ENCODE measurements at regions of chr15 and their contacts with region 1.

Region 1: GRCh38 chr15:52780172-52780980 is 9.8 kb downstream of the ONECUT1 start:
- DNase-seq: peak; percentile 60
- H3K4me3 Mint-ChIP-seq: no peak overlapping the region
- H3K27ac Mint-ChIP-seq: no peak overlapping the region
- H3K4me1 Mint-ChIP-seq: peaks cover 6% of the 10 kb centered on the region
- H3K27me3 Mint-ChIP-seq: peaks cover 77% of the 10 kb centered on the region

Region 2: DNA sequence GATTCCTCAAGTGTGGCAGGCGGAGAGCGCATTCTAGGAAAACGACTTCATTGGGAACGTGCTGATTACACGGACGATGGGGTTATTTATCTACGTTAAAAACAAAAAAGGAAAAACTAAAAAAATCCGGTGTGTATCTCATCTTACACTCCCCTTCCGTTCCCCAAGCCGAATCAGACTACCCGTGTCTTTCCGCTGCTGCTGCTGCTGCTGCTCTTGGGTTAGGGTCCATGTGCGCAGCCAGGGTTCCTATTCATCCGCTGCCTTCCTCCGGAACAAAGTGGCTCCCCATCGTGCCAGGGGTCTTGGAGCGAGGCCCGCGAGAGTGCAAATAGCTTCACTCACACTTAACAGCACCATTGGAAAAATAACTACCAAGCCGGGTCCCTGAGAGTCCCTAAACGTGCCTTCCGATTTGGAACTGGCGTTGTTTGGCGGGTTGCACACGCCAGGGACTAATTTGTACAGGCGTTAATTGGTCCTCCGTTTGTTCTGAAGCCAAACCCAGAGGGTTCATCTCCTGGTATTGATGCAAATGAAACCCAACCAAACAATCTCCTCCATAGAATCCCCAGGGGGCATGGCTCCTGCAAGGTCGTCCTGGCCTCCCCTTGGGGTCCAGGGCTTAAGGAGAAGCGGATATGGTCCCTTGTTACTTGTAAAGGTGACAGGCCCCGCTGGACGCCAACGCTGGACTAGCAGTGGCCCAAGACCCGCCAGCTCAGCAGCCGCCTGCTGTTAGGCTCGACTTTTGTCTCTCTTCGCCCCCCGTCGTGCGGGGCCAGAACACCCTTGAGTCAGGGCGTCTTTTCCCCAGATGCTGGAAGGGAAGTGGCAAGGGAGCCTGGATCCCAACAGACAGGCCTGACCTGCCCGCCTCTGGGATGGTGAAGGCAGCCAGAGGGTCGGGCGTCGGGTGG is 20.7 kb after region 1 on chr15:
- intact Hi-C with region 1: loop called (anchors 2 kb)
- DNase-seq: no peak
- H3K4me3 Mint-ChIP-seq: no peak overlapping the region
- H3K27ac Mint-ChIP-seq: no peak overlapping the region
- H3K4me1 Mint-ChIP-seq: peaks cover 19% of the 10 kb centered on the region
- H3K27me3 Mint-ChIP-seq: peaks cover 81% of the 10 kb centered on the region

Region 3: GRCh38 chr15:53197426-53197839 is 417.1 kb after region 1 on chr15:
- intact Hi-C with region 1: loop called (anchors 5 kb)
- DNase-seq: peak; percentile 34
- H3K4me3 Mint-ChIP-seq: no peak overlapping the region
- H3K27ac Mint-ChIP-seq: no peak overlapping the region
- H3K4me1 Mint-ChIP-seq: peaks cover 5% of the 10 kb centered on the region
- H3K27me3 Mint-ChIP-seq: peaks cover 3% of the 10 kb centered on the region

Region 4: GRCh38 chr15:53448232-53449001 is 668.0 kb after region 1 on chr15:
- intact Hi-C with region 1: no loop called
- DNase-seq: no peak
- H3K4me3 Mint-ChIP-seq: no peak overlapping the region
- H3K27ac Mint-ChIP-seq: no peak overlapping the region
- H3K4me1 Mint-ChIP-seq: no peaks in the 10 kb centered on the region
- H3K27me3 Mint-ChIP-seq: no peaks in the 10 kb centered on the region